ACHN (cell line): ENCODE measurements at regions of chr1 and their contacts with region 1.

Region 1: DNA sequence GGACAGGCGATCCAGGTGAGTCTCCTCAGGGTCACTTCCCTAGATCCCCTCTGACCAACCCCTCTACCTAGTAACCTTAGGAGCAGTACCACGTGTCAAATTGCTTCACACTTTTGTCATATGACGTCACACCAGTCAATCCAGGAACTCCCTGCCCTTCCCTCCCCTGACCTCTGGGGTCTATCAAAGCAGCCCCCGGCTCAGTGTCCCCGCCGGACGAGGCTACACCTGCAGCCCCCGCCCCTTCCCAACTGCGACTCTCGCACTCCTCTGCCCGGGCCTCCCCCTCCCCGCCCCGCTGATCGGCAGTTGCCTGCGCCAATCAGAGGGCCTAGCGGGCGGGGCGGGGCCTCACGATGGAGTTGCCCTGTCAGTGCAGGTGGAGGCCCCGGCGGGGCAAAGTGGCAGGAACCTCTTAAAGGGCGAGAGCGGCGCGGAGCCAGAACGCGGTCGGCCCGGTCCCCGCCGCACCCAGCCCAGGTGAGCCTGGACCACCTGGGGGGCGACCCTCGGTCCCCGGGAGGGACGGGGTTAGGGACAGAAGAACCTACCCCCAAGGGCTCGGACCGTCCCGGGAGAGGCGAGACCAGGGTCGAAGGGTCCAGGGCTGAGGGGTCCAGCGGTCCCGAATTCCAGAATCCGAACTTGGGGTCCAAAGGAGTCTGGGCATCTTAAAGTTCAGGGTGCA is 27.5 kb upstream of the EPB41 start:
- DNase-seq: peak; percentile 85

Region 2: GRCh38 chr1:29033829-29034466 is 147.1 kb after region 1 on chr1:
- in situ Hi-C with region 1: loop called (anchors 10 kb)
- DNase-seq: peak; percentile 48